HepG2 (cell line): ENCODE measurements at regions of chr11 and their contacts with region 1.

Region 1: DNA sequence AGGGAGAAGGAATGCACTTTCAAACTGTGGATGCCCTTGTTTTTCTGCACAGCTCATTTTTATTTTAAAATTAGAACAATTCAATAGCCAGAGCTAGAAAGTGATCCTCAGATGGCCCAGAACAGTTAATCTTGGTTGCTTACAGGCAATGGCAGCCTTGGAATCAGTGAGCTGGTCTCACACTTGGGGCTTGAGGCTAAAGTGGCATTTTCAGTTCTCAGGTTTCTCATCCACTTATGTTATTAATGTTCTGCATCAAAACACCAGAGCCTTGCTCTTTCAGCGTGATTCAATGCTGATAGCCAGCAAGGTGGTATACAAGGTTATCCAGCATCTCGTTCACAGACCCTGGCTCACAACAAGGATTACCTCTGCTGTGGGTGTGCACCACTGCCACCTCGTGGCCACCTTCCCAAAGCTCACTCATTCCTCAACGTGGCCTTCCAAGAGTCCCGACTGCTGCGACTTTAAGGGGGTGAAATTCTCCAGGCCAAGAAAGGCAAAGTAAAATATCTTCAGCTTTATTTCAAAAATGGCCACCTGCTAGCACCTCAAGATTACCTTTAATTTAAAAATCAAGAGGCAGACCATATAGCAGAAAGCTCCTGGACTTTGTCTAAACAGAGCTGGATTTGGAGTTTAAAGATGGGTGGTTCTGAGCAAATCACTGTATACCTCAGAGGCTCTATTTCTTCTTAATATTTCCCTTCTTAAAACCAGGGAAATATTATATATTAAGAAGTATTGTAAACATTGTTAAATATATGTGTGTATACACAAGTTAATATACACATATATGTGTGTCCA is 34.2 kb upstream of the FSHB start:
- DNase-seq: peak; percentile 25
- ATAC-seq: peak; percentile 96
- H3K4me3 ChIP-seq: no peak overlapping the region
- H3K27ac ChIP-seq: no peak overlapping the region
- H3K4me1 ChIP-seq: no peaks in the 10 kb centered on the region
- H3K27me3 ChIP-seq: no peaks in the 10 kb centered on the region
- CTCF ChIP-seq: peak; percentile 82
- EP300 ChIP-seq: no peak
- POLR2A ChIP-seq: no peak
- RAD21 ChIP-seq: 0 out of 2 replicates have a peak, but pooled peaks have one; percentile 12

Region 2: DNA sequence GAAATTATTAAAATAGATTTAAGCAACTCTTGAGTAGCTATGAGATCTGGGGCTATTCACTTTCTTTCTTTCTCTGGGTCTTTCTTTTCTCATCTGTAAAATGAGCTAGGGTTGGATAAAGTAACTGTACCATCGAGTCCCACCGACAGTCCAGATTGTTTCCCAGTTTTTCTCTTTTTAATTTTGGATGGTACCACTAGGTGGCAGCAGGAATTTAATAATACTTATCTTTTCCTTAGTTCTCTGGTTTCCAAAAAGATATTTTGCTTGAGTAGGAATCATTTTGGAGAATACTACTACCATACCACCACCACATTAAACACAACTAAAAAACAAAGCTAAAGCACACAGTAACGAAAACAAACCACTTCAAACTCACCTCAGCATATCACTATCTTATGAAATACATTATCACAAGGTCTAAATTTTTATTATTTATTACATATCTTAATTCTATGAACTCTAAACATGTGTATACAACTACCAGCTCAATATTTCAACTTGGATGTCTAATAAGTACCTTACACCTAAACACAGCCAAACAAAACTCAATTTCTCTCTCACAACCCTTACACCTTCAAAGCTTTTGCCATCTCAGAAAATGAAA is 763.8 kb before region 1 on chr11:
- CTCF ChIA-PET with region 1: no interaction called
- POLR2A ChIA-PET with region 1: no interaction called
- in situ Hi-C with region 1: loop called (anchors 25 kb)
- intact Hi-C with region 1: loop called (anchors 1 kb)
- DNase-seq: peak; percentile 2
- ATAC-seq: no peak
- H3K4me3 ChIP-seq: no peak overlapping the region
- H3K27ac ChIP-seq: no peak overlapping the region
- H3K4me1 ChIP-seq: no peaks in the 10 kb centered on the region
- H3K27me3 ChIP-seq: no peaks in the 10 kb centered on the region
- CTCF ChIP-seq: peak; percentile 40
- EP300 ChIP-seq: no peak
- POLR2A ChIP-seq: no peak
- RAD21 ChIP-seq: no peak